ENCODE measurements at regions of chr15 and their contacts with region 1.

Region 1: DNA sequence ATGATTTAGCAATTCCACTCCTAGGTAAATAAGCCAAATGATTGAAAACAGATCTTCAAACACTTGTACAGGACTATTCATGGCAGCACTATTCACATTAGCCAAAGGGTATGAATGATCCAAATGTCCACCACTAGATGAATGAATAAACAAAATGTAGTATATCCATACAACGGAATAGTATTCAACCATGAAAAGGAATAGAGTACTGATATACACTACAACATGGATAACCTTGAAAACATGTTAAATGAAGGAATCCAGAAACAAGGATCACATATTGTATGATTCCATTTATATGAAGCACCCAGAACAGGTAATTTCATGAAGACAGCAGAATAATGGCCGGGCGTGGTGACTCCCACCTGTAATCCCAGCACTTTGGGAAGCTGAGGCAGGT is 78.2 kb upstream of the IGF1R start:
- DNase-seq: no peak
- H3K4me3 ChIP-seq: no peak overlapping the region
- H3K27ac ChIP-seq: no peak overlapping the region
- H3K27me3 ChIP-seq: peaks cover 0 to 19% (median 0%) of the 10 kb centered on the region in 45 donors
- CTCF ChIP-seq: no peak

Region 2: DNA sequence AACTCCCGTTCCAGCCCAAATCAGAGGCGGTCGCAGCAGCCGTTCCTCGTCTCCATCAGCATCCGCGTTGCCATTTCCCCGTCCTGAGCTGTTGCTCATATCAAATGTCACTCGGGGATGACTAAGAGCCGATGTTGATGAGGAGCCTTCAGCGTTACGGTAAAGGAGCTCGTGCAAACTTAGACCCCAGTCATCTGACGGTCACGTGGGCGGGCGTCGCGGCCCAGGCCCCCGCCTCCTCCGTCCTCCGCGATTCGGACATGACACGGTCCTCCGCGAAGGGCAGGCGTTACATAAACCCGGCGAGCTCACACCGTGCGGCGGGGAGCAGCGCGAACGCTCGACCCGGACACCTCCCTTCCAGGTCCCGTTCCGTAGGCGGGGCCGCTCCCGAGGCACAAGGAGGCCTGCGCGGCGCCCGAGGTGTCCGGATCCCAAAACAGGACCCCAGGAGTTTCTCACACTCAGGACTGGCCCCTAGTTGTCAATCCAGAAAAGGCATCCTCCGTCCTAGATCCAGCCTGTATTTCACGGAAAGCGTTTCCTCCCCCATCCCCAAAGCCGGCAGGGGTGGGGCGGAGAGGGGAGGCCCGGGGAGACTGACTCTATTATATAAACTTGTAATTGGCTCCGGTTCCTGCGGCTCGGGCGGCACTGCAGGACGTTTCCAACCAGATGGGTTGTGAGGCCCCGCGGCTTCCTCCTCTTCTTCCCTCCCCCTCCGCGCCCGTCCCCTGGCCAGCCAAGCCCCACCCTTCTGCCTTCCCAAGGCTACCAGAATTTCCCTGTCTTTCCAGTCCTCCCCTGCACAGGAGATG is 21.8 kb before region 1 on chr15:
- intact Hi-C with region 1: loop called in 1 of 2 experiments (anchors 1 kb)
- DNase-seq: peak; percentile 40 to 80 (median 55)
- H3K4me3 ChIP-seq: peak overlapping the region; percentile 50 to 94 (median 71)
- H3K27ac ChIP-seq: peak overlapping the region in 57 of 59 donors; percentile 3 to 91 (median 64)
- H3K27me3 ChIP-seq: no peaks in the 10 kb centered on the region
- CTCF ChIP-seq: peak in 14 of 56 donors; percentile 9 to 30 (median 20)

Region 3: DNA sequence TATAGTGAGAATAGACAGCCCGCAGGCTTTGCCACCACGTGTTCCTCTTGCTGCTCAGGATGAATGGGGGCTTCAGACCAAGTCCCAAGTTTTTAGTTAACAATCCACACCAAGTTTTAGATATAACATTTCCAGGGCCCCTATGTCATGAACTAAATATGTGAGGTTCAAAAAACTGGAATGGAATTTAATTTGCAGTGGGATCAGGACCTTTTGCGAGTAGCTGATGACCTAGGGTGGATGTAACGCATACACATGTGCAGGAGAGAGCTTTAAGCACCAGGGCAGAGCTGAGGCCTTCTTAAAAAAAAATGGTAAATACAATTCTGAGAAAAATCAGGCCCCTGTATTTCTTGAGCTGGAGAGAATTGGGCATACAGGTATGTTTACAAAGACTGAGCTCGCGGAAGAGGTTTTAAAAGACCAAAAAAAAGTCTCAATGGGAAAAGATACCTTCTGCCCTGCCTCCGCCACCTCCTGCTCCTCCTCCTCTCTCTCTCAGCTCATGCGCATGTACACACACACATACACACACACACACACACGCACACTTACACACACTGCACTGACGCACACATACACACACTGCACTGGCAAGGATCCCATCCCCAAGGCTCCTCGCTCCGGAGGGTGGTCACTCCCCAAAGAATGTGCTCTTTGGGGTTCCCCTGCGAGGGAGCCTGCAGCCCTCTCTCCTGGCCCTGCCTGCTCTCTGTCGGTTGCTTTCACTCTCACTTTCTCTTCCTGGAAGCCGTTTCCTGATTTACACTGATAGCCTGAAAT is 30.0 kb after region 1 on chr15:
- intact Hi-C with region 1: no loop called
- DNase-seq: no peak
- H3K4me3 ChIP-seq: peak overlapping the region in 53 of 59 donors; percentile 1 to 58 (median 36)
- H3K27ac ChIP-seq: no peak overlapping the region
- H3K27me3 ChIP-seq: peaks cover 0 to 27% (median 0%) of the 10 kb centered on the region in 45 donors
- CTCF ChIP-seq: no peak

Measured in dorsolateral prefrontal cortex (tissue), 120 donors.